ENCODE measurements at regions of chr9 and their contacts with region 1.

Region 1: GRCh38 chr9:134024828-134025605 is at the start of gene BRD3OS:
- DNase-seq: peak; percentile 83 to 98 (median 92)
- ATAC-seq: peak; percentile 88
- H3K4me3 ChIP-seq: peak within 1 kb of the TSS; percentile 82
- H3K4me3 Mint-ChIP-seq: peak within 1 kb of the TSS; percentile 88
- H3K27ac ChIP-seq: peak within 1 kb of the TSS; percentile 30 to 34
- H3K27ac Mint-ChIP-seq: peak within 1 kb of the TSS; percentile 27
- H3K4me1 ChIP-seq: peaks cover 13% of the 10 kb centered on the region
- H3K4me1 Mint-ChIP-seq: no peaks in the 10 kb centered on the region
- H3K27me3 ChIP-seq: no peaks in the 10 kb centered on the region
- H3K27me3 Mint-ChIP-seq: no peaks in the 10 kb centered on the region
- CTCF ChIP-seq: no peak
- total RNA-seq, gene BRD3OS: 4.0 to 4.9 TPM

Region 2: GRCh38 chr9:133356391-133357091 is 668.5 kb before region 1 on chr9 and contains the starts of genes SURF1 and SURF2:
- CTCF ChIA-PET with region 1: no interaction called
- POLR2A ChIA-PET with region 1: no interaction called
- intact Hi-C with region 1: loop called in 1 of 2 experiments (anchors 10 kb)
- DNase-seq: peak; percentile 81 to 94 (median 90)
- ATAC-seq: peak; percentile 95
- H3K4me3 ChIP-seq: peak within 1 kb of the TSS; percentile 74
- H3K4me3 Mint-ChIP-seq: peak within 1 kb of the TSS; percentile 92
- H3K27ac ChIP-seq: peak within 1 kb of the TSS; percentile 56 to 79
- H3K27ac Mint-ChIP-seq: peak within 1 kb of the TSS; percentile 88
- H3K4me1 ChIP-seq: peaks cover 50% of the 10 kb centered on the region
- H3K4me1 Mint-ChIP-seq: peaks cover 27% of the 10 kb centered on the region
- H3K27me3 ChIP-seq: no peaks in the 10 kb centered on the region
- H3K27me3 Mint-ChIP-seq: no peaks in the 10 kb centered on the region
- CTCF ChIP-seq: no peak
- total RNA-seq, gene SURF1: 42.5 to 45.9 TPM
- total RNA-seq, gene SURF2: 12.7 TPM

Region 3: DNA sequence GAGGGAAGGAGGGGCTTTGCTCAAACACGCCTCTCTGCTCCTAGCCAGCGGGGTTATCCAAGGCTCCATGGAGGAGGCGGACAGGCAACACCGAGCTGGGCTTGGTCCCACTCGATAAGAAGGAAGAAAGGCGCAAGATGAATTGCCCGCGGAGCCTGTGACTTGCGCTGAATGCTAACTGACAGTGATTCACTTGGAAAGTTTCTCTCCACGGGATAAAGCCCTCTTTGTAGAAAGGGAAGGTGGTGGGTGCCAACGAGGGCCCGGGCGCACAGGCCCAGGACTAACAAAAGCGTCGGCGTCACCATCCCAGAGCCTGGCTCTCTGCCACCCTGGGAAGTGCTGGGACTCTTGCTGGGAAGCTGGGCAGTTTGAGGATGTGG is 108.9 kb before region 1 on chr9:
- CTCF ChIA-PET with region 1: no interaction called
- POLR2A ChIA-PET with region 1: no interaction called
- intact Hi-C with region 1: no loop called
- DNase-seq: no peak
- ATAC-seq: no peak
- H3K4me3 ChIP-seq: no peak overlapping the region
- H3K4me3 Mint-ChIP-seq: no peak overlapping the region
- H3K27ac ChIP-seq: no peak overlapping the region
- H3K27ac Mint-ChIP-seq: no peak overlapping the region
- H3K4me1 ChIP-seq: no peaks in the 10 kb centered on the region
- H3K4me1 Mint-ChIP-seq: no peaks in the 10 kb centered on the region
- H3K27me3 ChIP-seq: no peaks in the 10 kb centered on the region
- H3K27me3 Mint-ChIP-seq: peaks cover 10% of the 10 kb centered on the region
- CTCF ChIP-seq: no peak

Region 4: DNA sequence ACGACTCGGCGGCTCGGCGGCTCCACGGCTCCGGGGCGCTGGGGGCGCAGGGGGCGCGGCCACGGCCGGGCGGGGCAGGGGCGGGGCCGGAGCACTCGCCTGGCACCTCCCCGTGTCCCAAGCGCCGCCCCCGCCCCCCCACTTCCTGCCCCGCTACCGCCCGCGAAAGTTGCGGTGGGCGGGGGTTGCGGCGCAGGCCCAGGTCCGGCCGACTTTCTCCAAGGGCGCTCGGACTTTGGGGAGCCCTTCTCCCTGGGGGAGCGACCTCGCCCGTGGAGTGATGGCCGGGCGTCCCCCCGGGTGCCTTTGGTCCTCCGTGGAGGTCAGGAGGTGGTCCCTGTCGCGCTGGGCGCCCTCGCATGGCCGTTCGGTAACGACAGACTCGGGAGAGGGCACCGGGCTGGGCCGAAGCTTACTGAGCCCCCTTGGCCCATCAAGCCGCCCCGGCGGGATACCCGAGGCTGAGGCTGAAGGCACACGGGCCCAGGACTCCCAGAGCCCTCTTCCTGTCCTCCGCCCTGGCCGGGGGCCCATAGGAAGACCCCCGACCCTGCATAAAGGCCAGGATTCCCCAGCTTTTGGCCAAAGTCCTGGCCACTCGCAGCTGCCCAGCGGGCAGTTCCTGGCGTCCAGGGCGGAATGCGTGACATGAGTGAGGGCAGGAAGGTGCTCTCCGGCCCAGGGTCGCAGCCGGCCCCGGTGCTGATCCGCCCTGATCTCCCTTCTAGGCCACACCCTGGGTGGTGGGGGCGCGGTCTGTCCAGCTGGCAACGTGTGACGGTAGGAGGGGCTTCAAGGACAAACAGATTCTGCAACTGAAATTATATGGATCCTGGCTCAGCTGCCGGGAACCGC is 32.0 kb before region 1 on chr9:
- CTCF ChIA-PET with region 1: interaction called, 10 read pairs
- POLR2A ChIA-PET with region 1: interaction called, 3 read pairs
- intact Hi-C with region 1: loop called in 1 of 2 experiments (anchors 1 kb)
- DNase-seq: peak; percentile 52 to 89 (median 72)
- ATAC-seq: peak; percentile 78
- H3K4me3 ChIP-seq: peak overlapping the region; percentile 79
- H3K4me3 Mint-ChIP-seq: peak overlapping the region; percentile 84
- H3K27ac ChIP-seq: no peak overlapping the region
- H3K27ac Mint-ChIP-seq: no peak overlapping the region
- H3K4me1 ChIP-seq: peaks cover 29% of the 10 kb centered on the region
- H3K4me1 Mint-ChIP-seq: no peaks in the 10 kb centered on the region
- H3K27me3 ChIP-seq: peaks cover 6 to 7% of the 10 kb centered on the region in 2 experiments
- H3K27me3 Mint-ChIP-seq: peaks cover 18% of the 10 kb centered on the region
- CTCF ChIP-seq: peak; percentile 48

Region 5: DNA sequence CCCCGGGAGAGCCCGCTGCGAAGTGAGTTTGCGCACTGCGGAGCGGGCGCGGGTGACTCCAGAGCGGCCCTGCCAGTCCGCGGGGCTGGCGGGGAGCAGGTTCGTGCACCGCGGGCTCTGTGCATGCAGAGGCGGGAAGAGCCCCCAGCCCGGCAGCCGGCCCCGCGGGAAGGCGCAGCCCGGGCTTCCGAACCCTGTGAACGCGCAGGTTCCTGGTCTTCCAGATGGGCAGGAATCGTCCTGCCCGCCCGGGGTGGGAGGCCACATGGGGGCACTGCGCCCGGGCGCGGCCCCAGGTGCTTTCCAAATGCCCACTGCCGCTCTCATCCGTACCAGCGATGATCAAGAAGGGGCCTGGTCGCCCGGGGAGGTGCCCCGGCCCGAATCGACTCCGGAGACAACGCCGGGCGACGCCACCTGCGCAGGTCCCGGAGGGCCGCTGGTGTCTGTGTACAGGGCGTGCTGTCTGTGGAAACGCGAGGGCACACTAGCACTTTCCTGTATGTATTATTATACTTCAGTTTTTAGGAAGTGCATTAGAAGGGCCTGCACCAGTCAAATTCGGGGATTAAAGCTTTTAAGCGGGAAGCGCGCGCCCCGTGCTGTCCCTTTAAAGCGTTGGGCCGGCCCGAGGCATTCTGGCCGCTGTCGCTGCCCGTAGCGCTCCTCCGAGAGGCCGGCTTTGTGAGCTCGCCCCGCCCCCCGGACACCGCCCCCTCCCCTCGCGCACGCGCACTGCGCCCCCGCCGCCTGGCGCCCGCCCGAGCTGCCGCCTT is 110.5 kb after region 1 on chr9 and contains the start of gene WDR5:
- CTCF ChIA-PET with region 1: no interaction called
- POLR2A ChIA-PET with region 1: interaction called, 20 read pairs
- intact Hi-C with region 1: loop called in 1 of 2 experiments (anchors 1 kb)
- DNase-seq: peak; percentile 87 to 96 (median 90)
- ATAC-seq: peak; percentile 83
- H3K4me3 ChIP-seq: peak within 1 kb of the TSS; percentile 96
- H3K4me3 Mint-ChIP-seq: peak within 1 kb of the TSS; percentile 92
- H3K27ac ChIP-seq: peak within 1 kb of the TSS; percentile 72 to 80
- H3K27ac Mint-ChIP-seq: peak within 1 kb of the TSS; percentile 87
- H3K4me1 ChIP-seq: peaks cover 47% of the 10 kb centered on the region
- H3K4me1 Mint-ChIP-seq: peaks cover 48% of the 10 kb centered on the region
- H3K27me3 ChIP-seq: no peaks in the 10 kb centered on the region
- H3K27me3 Mint-ChIP-seq: no peaks in the 10 kb centered on the region
- CTCF ChIP-seq: no peak
- total RNA-seq, gene WDR5: 14.9 to 16.9 TPM

Region 6: DNA sequence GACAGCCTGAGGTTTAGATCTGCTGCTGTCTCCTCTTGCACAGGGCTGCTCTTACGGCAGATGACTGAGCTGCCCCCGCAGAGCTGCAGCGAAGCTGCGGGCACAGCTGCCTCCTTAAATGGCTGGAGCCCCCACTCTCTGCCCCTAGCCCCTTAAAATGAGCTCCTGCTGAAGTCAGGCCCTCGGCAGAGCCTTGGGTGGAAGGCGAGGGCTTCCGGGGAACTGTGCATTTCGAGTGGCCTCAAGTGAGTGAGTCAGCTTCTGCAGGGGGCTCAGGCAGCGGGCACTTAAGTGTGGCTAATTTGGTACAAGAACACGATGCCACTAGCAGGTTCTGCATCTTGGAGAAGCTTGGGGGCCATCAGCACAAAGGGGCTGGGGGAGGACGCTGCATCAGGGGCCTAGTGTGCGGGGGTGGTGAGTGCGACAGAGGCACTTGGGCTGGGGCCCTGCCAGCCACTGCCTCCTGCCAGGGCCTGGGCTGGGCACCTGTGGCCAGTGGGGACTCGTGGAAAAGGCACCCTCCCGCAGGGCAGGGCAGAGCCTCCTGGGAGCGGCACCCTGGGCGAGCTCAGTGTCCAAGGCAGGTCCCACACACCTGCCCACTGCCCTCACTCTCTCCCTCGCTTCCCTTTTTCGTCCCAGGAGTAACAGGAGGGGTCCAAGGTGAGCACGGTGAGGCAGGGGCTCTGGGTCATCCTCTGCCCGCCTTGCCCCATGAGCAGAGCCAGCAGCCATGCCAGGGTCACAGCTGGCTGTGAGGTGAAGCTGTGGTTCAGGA is 168.1 kb after region 1 on chr9:
- CTCF ChIA-PET with region 1: no interaction called
- POLR2A ChIA-PET with region 1: no interaction called
- intact Hi-C with region 1: no loop called
- DNase-seq: no peak
- ATAC-seq: no peak
- H3K4me3 ChIP-seq: no peak overlapping the region
- H3K4me3 Mint-ChIP-seq: no peak overlapping the region
- H3K27ac ChIP-seq: no peak overlapping the region
- H3K27ac Mint-ChIP-seq: no peak overlapping the region
- H3K4me1 ChIP-seq: peaks cover 25% of the 10 kb centered on the region
- H3K4me1 Mint-ChIP-seq: peaks cover 22% of the 10 kb centered on the region
- H3K27me3 ChIP-seq: no peaks in the 10 kb centered on the region
- H3K27me3 Mint-ChIP-seq: no peaks in the 10 kb centered on the region
- CTCF ChIP-seq: no peak

Region 7: GRCh38 chr9:134455934-134456739 is 431.1 kb after region 1 on chr9:
- CTCF ChIA-PET with region 1: no interaction called
- POLR2A ChIA-PET with region 1: no interaction called
- intact Hi-C with region 1: loop called in 1 of 2 experiments (anchors 10 kb)
- DNase-seq: peak; percentile 50 to 92 (median 70)
- ATAC-seq: peak; percentile 92
- H3K4me3 ChIP-seq: peak overlapping the region; percentile 59
- H3K4me3 Mint-ChIP-seq: peak overlapping the region; percentile 78
- H3K27ac ChIP-seq: peak overlapping the region; percentile 68 to 93
- H3K27ac Mint-ChIP-seq: peak overlapping the region; percentile 91
- H3K4me1 ChIP-seq: peaks cover 26% of the 10 kb centered on the region
- H3K4me1 Mint-ChIP-seq: peaks cover 7% of the 10 kb centered on the region
- H3K27me3 ChIP-seq: no peaks in the 10 kb centered on the region
- H3K27me3 Mint-ChIP-seq: no peaks in the 10 kb centered on the region
- CTCF ChIP-seq: no peak